Common myeloid progenitor, CD34-positive (primary cell): ENCODE measurements at regions of chr11 and their contacts with region 1.

Region 1: GRCh38 chr11:64204464-64204989 is 2.0 kb upstream of the FERMT3 start:
- DNase-seq: peak; percentile 95 to 98 (median 96)
- H3K4me3 ChIP-seq: peak overlapping the region in 1 of 7 experiments; percentile 1
- H3K27ac ChIP-seq: no peak overlapping the region
- H3K4me1 ChIP-seq: peaks cover 5 to 55% (median 53%) of the 10 kb centered on the region in 4 experiments
- H3K27me3 ChIP-seq: no peaks in the 10 kb centered on the region

Region 2: GRCh38 chr11:63745304-63746170 is 459.0 kb before region 1 on chr11:
- CTCF ChIA-PET with region 1: no interaction called
- POLR2A ChIA-PET with region 1: no interaction called
- DNase-seq: peak; percentile 38 to 41 (median 40)
- H3K4me3 ChIP-seq: no peak overlapping the region
- H3K27ac ChIP-seq: no peak overlapping the region
- H3K4me1 ChIP-seq: peaks cover 0 to 3% (median 0%) of the 10 kb centered on the region in 4 experiments
- H3K27me3 ChIP-seq: no peaks in the 10 kb centered on the region

Region 3: GRCh38 chr11:64102005-64102738 is 102.4 kb before region 1 on chr11:
- CTCF ChIA-PET with region 1: no interaction called
- POLR2A ChIA-PET with region 1: no interaction called
- DNase-seq: no peak
- H3K4me3 ChIP-seq: no peak overlapping the region
- H3K27ac ChIP-seq: no peak overlapping the region
- H3K4me1 ChIP-seq: no peaks in the 10 kb centered on the region
- H3K27me3 ChIP-seq: no peaks in the 10 kb centered on the region

Region 4: DNA sequence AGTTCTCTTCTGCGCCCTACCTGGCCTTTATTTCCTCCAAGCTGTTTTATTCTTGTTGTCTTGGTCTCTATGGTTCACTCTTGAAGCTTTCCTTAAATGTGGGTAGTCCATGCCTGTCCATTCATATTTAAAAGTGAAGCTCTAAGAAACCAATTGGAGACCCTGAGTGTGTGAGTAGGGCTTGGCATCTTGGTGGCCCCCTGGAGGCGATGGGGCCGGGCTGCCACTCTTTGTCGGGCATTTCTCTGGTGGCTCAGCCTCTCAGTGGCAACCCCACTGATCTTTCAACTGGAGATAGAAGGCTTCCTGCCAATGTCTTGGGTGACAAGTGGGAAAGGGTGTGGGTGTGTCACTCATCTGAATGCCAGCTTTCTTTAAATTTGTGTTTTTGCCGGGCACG is 12.4 kb after region 1 on chr11:
- CTCF ChIA-PET with region 1: interaction called, 321 read pairs
- POLR2A ChIA-PET with region 1: interaction called, 49 read pairs
- DNase-seq: peak; percentile 29 to 57 (median 56)
- H3K4me3 ChIP-seq: no peak overlapping the region
- H3K27ac ChIP-seq: no peak overlapping the region
- H3K4me1 ChIP-seq: no peaks in the 10 kb centered on the region
- H3K27me3 ChIP-seq: no peaks in the 10 kb centered on the region

Region 5: GRCh38 chr11:64233913-64234834 is 29.6 kb after region 1 on chr11 and contains the start of gene VEGFB:
- CTCF ChIA-PET with region 1: interaction called, 58 read pairs
- POLR2A ChIA-PET with region 1: interaction called, 12 read pairs
- DNase-seq: peak in 2 of 3 donors; percentile 54 to 60
- H3K4me3 ChIP-seq: peak within 1 kb of the TSS; percentile 29 to 84 (median 70)
- H3K27ac ChIP-seq: peak within 1 kb of the TSS in 1 of 2 experiments; percentile 58
- H3K4me1 ChIP-seq: peaks cover 0 to 43% (median 41%) of the 10 kb centered on the region in 4 experiments
- H3K27me3 ChIP-seq: no peaks in the 10 kb centered on the region

Region 6: GRCh38 chr11:64263021-64263946 is 58.8 kb after region 1 on chr11:
- CTCF ChIA-PET with region 1: interaction called, 53 read pairs
- POLR2A ChIA-PET with region 1: interaction called, 3 read pairs
- DNase-seq: no peak
- H3K4me3 ChIP-seq: no peak overlapping the region
- H3K27ac ChIP-seq: no peak overlapping the region
- H3K4me1 ChIP-seq: peaks cover 0 to 14% (median 13%) of the 10 kb centered on the region in 4 experiments
- H3K27me3 ChIP-seq: no peaks in the 10 kb centered on the region

Region 7: DNA sequence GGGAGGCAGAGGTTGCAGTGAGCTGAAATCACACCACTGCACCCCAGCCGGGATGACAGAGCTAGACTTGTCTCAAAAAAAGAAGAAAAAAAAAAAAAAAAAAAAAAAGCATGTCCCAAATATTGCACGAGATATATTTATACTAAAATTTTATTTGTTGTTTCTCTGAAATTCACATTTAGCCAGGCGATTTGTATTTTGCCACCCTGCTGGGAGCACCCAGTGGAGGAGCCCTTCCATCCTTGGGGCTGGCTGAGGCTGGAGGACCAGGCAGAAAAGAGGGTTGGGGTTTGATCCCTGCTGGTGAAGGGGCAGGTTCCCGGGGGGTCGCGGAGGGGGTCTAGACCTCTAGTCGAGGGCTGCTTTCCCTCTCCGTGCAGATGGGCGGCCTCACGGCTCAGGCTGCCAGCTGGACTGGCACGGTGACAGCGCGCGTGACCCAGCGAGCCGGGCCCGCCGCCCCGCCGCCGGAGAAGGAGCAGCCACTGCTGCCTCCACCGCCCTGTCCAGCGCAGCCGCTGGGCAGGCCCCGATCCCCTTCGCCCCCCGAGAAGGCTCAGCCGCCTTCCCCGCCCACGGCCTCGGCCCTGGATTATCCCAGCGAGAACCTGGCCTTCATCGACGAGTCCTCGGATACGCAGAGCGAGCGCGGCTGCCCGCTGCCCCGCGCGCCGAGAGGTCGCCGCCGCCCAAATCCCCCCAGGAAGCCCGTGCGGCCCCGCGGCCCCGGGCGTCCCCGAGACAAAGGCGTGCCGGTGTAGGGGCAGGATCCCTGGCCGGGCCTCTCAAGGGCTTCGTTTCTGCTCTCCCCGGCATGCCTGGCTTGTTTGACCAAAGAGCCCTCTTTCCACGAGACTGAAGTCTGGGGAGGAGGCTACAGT is 94.7 kb after region 1 on chr11:
- CTCF ChIA-PET with region 1: interaction called, 123 read pairs
- POLR2A ChIA-PET with region 1: interaction called, 26 read pairs
- DNase-seq: peak in 2 of 3 donors; percentile 33 to 57
- H3K4me3 ChIP-seq: peak overlapping the region in 5 of 7 experiments; percentile 6 to 66 (median 40)
- H3K27ac ChIP-seq: no peak overlapping the region
- H3K4me1 ChIP-seq: peaks cover 0 to 41% (median 33%) of the 10 kb centered on the region in 4 experiments
- H3K27me3 ChIP-seq: peaks cover 14 to 73% (median 51%) of the 10 kb centered on the region in 5 experiments

Region 8: GRCh38 chr11:64358907-64359711 is 154.6 kb after region 1 on chr11 and contains the start of gene RPS6KA4:
- CTCF ChIA-PET with region 1: interaction called, 17 read pairs
- POLR2A ChIA-PET with region 1: no interaction called
- DNase-seq: peak in 2 of 3 donors; percentile 48 to 63
- H3K4me3 ChIP-seq: peak within 1 kb of the TSS; percentile 52 to 86 (median 75)
- H3K27ac ChIP-seq: peak within 1 kb of the TSS in 1 of 2 experiments; percentile 70
- H3K4me1 ChIP-seq: peaks cover 2 to 82% (median 51%) of the 10 kb centered on the region in 4 experiments
- H3K27me3 ChIP-seq: no peaks in the 10 kb centered on the region